Activated CD4-positive, alpha-beta memory T cell treated with anti-CD3 and anti-CD28 coated beads for 36 hours (primary cell): ENCODE measurements at regions of chr5 and their contacts with region 1.

Region 1: DNA sequence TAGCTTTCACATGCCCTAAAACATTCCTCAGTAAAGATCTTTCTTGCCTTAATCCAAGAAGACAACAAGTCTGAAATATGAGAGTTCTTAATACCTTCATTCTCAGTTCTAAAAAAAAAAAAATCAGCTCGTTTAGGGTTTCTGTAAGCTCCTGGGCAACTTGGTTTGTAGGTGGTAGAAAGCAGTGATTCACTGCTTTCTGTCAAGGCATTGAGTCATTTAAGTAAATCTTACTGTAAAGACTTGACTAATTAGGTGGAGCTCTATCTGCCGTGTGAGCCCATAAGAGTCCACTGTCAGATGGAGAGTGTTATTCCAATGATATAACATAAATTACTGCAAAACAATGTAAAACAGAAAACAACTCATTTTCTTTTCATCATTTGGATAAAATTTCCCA is 56.1 kb upstream of the MAST4 start:
- DNase-seq: no peak
- H3K4me3 Mint-ChIP-seq: no peak overlapping the region
- H3K27ac Mint-ChIP-seq: no peak overlapping the region
- H3K4me1 Mint-ChIP-seq: peaks cover 13% of the 10 kb centered on the region
- H3K27me3 Mint-ChIP-seq: peaks cover 11% of the 10 kb centered on the region

Region 2: DNA sequence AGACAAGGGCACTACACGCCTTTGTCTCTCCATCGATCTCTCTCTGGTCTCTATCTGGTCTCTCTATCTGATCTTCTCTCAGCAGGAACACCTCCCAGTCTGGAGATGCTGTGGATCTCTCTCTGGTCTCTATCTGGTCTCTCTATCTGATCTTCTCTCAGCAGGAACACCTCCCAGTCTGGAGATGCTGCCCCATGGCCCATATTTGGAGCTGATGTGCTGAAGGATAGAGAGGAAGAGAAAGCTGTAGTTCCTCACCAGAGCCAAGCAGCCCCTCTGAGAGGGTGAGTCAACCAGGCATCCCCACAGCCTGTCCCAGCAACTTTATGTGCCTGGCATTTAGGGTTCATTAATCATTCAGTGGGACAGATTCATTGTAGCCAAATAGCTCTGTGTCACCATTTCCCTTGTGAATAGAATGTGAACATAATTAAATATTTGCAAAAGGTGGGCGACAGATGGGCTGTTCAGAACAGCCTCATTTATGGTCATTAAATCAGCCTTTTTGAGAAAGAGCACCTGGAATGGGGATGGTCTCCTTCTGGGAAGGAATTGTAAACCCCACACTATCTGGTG is 133.2 kb before region 1 on chr5:
- CTCF ChIA-PET with region 1: no interaction called
- POLR2A ChIA-PET with region 1: no interaction called
- intact Hi-C with region 1: no loop called
- DNase-seq: no peak
- H3K4me3 Mint-ChIP-seq: no peak overlapping the region
- H3K27ac Mint-ChIP-seq: no peak overlapping the region
- H3K4me1 Mint-ChIP-seq: no peaks in the 10 kb centered on the region
- H3K27me3 Mint-ChIP-seq: peaks cover 12% of the 10 kb centered on the region

Region 3: DNA sequence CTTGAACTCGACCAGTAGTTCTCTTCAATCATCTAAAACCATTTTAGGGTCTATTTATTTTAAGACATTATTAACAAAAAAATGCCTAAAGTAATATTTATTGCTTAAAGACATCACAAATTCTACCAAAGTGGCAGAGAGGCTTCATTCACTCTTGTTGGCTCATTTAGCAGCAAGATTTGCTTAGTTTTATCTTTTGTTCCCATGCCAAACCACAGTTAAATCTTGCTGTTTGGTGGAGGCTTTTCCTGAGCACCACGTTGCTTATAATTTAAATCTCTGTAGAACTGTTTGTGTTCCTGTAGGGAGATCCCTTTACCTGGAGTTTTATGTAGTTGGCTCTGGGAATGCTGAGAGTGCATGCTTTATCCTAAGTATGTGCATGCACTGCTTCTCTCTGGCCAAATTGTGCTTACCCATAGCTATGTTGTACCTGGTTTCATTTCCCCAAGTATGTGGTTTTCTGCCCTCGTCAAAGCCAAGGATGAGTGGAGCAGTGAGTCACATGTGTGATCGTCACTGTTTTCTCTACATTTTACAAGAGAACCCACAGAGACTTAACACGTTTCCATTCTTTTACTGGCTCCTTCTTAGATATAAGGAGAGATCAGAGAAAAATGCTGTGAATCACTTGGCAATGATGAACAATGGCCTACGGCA is 14.0 kb after region 1 on chr5:
- CTCF ChIA-PET with region 1: no interaction called
- POLR2A ChIA-PET with region 1: interaction called, 5 read pairs
- intact Hi-C with region 1: loop called (anchors 1 kb)
- DNase-seq: peak; percentile 62
- H3K4me3 Mint-ChIP-seq: no peak overlapping the region
- H3K27ac Mint-ChIP-seq: peak overlapping the region; percentile 44
- H3K4me1 Mint-ChIP-seq: peaks cover 19% of the 10 kb centered on the region
- H3K27me3 Mint-ChIP-seq: peaks cover 8% of the 10 kb centered on the region